ENCODE measurements at regions of chr7 and their contacts with region 1.

Region 1: DNA sequence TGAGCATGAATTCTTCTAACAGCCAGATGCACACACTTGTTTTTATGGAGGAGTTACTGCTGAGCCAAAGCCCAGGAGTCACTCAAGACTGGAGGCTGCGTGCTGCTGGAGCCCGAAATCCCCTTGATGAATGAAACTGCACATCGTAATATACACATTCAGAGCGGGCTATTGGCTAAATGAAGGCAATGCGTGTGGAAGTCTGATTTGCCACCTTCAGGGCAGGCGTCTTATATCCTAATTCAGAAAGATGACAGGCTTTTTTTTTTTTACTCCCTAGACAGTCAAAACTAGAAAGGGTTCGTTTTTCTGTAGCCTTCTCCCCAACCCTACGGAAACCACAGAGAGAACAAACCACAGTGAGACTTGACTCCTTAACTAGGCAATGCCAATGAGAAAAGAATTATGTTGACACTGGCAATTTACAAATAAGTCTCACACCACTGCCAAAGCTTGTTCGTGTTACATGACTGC is 227.2 kb upstream of the KLF14 start:
- DNase-seq: no peak

Region 2: GRCh38 chr7:130649004-130649790 is 312.0 kb before region 1 on chr7:
- intact Hi-C with region 1: no loop called
- DNase-seq: no peak

Region 3: DNA sequence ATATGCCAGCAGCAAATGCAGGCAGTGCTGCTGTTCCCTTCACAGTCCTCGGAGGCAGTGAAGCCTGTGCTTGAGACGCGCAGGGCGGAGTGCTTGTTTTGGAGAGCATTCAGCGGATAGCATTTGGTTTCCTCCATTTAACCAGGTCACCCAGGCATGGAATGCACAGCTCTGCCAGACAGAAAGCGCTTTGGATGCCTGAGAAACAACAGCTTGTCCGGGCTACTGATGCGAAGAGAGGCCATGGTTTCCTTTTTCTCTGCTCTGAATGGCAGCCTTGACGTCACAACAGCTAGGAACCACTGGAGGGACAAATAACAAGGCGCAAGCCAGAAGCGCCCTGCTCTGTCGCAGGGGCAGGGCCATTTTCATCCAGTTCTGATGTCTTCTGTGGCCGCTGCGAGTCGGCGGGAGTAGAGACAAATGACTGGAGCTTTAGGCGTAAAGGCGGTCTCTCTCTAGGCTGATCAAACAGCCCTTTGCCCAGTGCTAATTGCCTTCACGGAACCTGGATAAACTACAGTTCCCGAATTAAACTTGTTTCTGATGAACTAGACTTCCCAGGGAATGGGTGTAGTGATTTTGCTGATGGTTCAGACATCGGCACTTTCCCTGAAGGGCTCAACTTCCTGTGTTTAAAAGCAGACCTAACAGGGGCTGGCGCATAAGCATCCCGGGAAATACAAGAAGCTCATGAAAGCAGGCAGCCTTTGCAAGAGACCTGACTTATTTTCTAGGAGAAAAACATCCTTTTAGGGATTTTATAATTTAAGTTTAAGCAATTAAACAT is 39.6 kb before region 1 on chr7:
- intact Hi-C with region 1: loop called (anchors 5 kb)
- DNase-seq: no peak

Measured in cardiac septum (tissue), 1 donor.